Stomach (tissue), 19 donors: ENCODE measurements at regions of chr7 and their contacts with region 1.

Region 1: DNA sequence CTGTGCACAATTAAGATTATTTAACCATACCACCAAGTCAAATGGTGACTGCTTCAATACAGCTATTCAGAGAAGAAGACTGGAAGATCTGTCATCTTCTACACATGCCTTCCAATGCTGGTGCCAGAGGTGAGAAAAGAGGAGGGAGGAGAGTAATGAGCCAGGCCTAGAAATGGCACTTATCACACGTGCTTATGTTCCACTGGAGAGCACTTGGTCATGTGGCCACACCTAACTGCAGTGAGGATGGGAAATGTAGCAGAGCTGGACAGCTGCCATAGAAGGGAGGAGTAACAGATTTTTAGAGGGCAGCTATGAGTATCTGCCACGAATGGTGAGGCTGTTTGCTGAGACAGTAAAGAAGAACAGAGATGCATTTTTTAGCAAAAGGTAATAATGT is 77.1 kb downstream of the MPLKIP start:
- DNase-seq: peak in 1 of 2 donors; percentile 29
- H3K4me3 ChIP-seq: no peak overlapping the region
- H3K27ac ChIP-seq: no peak overlapping the region
- H3K4me1 ChIP-seq: peaks cover 0 to 31% (median 10%) of the 10 kb centered on the region in 4 donors
- H3K27me3 ChIP-seq: no peaks in the 10 kb centered on the region
- CTCF ChIP-seq: no peak
- EP300 ChIP-seq: no peak
- POLR2A ChIP-seq: no peak

Region 2: DNA sequence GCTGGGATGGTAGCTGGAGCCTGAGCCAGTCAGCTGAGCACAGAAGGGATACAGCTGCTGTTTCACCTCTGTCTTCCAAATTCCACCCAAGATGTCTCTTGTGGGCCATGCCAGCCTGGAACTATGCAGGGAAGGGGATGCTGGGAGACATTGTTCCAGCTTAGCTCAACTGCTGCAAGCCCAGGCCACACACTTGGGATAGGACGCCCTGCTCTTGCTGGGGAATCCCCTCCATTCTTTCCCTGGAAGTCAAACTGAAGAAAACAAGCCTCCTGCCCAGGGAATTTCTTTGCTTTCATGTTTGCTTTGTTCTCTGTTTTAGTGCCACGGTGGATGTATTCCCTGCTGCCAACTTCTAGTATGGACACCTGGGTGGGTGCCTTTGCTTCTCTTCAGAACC is 162.4 kb before region 1 on chr7:
- intact Hi-C with region 1: loop called (anchors 5 kb)
- DNase-seq: peak in 1 of 2 donors; percentile 7
- H3K4me3 ChIP-seq: no peak overlapping the region
- H3K27ac ChIP-seq: no peak overlapping the region
- H3K4me1 ChIP-seq: peaks cover 4 to 6% (median 5%) of the 10 kb centered on the region in 4 donors
- H3K27me3 ChIP-seq: peaks cover 0 to 5% (median 0%) of the 10 kb centered on the region in 3 donors
- CTCF ChIP-seq: no peak
- EP300 ChIP-seq: no peak
- POLR2A ChIP-seq: no peak

Region 3: DNA sequence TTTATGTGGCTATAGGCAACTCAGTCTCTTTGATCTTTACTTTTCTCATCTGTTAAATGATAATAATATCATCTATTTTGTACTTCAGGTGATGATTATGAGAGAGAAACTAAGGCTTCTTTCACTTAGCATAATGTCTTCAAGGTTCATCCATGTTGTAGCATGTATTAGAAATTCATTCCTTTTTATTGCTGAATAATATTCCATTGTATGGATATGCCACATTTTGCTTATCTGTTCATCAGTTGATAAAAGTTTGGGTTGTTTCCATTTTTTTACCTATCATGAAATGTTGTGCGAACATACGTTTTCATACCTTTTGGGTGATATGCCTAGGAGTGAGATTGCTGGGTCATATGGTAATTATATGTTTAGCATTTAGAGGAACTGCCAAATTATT is 114.4 kb before region 1 on chr7:
- intact Hi-C with region 1: no loop called
- DNase-seq: no peak
- H3K4me3 ChIP-seq: no peak overlapping the region
- H3K27ac ChIP-seq: no peak overlapping the region
- H3K4me1 ChIP-seq: peaks cover 0 to 2% (median under 1%) of the 10 kb centered on the region in 4 donors
- H3K27me3 ChIP-seq: no peaks in the 10 kb centered on the region
- CTCF ChIP-seq: no peak
- EP300 ChIP-seq: no peak
- POLR2A ChIP-seq: no peak

Region 4: DNA sequence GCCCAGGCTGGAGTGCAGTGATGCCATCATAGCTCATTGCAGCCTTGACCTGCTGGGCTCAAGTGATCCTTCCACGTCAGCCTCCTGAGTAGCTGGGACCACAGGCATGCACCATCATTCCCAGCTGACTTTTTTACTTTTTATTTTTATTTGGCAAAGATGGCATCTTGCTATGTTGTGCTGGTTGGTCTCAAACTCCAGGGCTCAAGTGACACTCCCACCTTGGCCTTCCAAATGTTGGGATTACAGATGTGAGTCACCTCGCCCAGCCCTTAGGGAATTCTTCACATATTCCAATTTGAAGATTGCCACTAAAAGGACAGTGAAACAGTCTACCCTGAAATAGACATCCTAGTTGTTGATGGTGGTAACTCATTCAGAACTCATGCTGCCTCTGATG is 105.2 kb after region 1 on chr7:
- intact Hi-C with region 1: no loop called
- DNase-seq: no peak
- H3K4me3 ChIP-seq: no peak overlapping the region
- H3K27ac ChIP-seq: no peak overlapping the region
- H3K4me1 ChIP-seq: no peaks in the 10 kb centered on the region
- H3K27me3 ChIP-seq: no peaks in the 10 kb centered on the region
- CTCF ChIP-seq: no peak
- EP300 ChIP-seq: no peak
- POLR2A ChIP-seq: no peak

Region 5: GRCh38 chr7:40356871-40357709 is 299.8 kb after region 1 on chr7:
- intact Hi-C with region 1: no loop called
- DNase-seq: no peak
- H3K4me3 ChIP-seq: no peak overlapping the region
- H3K27ac ChIP-seq: no peak overlapping the region
- H3K4me1 ChIP-seq: no peaks in the 10 kb centered on the region
- H3K27me3 ChIP-seq: no peaks in the 10 kb centered on the region
- CTCF ChIP-seq: no peak
- EP300 ChIP-seq: no peak
- POLR2A ChIP-seq: no peak